HEK293 (cell line): ENCODE measurements at regions of chr1 and their contacts with region 1.

Region 1: DNA sequence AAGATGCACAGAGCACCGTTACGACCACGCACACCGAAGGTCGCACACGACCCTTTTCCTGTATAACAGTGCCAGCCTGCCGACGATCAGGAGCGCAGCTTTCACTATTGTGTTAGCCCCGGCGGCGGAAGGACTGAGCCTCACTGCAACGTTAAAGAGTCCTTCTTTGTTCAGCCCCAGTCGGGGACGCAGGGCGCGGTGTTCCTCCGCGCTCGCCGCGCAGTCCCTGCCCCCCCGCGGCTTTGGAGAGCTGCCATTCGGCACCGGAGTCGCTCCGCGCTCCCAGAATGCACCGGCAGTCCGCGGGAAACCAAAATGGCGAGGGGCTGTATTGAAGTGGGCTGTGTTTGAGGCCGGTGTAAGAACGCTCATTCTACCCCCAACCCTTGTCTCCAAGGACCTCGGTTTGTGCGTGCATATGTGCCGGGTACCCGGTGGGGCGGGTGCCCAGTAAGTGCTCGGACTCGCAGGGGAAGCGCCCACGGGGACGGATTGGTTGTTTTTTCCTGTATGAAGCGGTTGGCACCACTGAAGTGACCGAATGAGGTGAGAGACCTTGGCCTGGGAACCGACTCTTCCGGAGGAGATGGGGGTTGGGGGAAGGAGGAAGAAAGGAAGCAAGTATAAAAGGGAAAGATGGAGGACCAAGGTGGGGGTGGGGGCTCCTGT is at the start of gene MTF2:
- H3K4me3 ChIP-seq: peak within 1 kb of the TSS; percentile 73
- H3K27ac ChIP-seq: peak within 1 kb of the TSS; percentile 88
- H3K4me1 ChIP-seq: peaks cover 6% of the 10 kb centered on the region
- CTCF ChIP-seq: peak; percentile 47; the same call in 1 of the 2 replicates

Region 2: GRCh38 chr1:93093332-93094006 is 14.3 kb after region 1 on chr1:
- CTCF ChIA-PET with region 1: no interaction called
- POLR2A ChIA-PET with region 1: interaction called, 14 read pairs
- H3K4me3 ChIP-seq: no peak overlapping the region
- H3K27ac ChIP-seq: no peak overlapping the region
- H3K4me1 ChIP-seq: no peaks in the 10 kb centered on the region
- CTCF ChIP-seq: no peak

Region 3: DNA sequence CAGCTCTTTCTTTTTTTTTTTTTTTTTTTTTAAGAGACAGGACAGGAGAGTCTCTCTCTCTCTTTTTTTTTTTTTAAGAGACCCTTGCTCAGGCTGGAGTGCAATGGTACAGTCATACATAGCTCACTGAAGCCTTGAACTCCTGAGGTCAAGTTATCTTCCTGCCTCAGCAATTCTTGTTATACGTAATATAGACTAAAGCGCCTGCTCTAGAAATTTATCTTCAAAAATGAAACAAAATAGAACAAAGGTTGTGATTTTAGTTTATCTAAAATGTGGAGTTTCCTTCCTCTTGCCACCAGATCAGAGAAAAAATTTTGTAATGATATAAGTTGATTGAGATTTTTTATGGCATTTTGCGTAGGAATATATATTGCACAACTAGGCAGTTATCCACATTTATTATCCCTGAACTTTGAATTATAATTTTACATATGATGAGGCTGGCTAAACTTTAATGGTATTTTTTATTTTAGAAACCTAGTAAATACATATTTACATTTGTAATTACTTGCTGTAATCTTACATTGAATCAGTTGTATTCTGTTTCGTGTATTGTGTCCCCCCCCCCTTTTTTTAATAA is 44.2 kb after region 1 on chr1:
- CTCF ChIA-PET with region 1: no interaction called
- POLR2A ChIA-PET with region 1: no interaction called
- H3K4me3 ChIP-seq: no peak overlapping the region
- H3K27ac ChIP-seq: no peak overlapping the region
- H3K4me1 ChIP-seq: no peaks in the 10 kb centered on the region
- CTCF ChIP-seq: no peak

Region 4: DNA sequence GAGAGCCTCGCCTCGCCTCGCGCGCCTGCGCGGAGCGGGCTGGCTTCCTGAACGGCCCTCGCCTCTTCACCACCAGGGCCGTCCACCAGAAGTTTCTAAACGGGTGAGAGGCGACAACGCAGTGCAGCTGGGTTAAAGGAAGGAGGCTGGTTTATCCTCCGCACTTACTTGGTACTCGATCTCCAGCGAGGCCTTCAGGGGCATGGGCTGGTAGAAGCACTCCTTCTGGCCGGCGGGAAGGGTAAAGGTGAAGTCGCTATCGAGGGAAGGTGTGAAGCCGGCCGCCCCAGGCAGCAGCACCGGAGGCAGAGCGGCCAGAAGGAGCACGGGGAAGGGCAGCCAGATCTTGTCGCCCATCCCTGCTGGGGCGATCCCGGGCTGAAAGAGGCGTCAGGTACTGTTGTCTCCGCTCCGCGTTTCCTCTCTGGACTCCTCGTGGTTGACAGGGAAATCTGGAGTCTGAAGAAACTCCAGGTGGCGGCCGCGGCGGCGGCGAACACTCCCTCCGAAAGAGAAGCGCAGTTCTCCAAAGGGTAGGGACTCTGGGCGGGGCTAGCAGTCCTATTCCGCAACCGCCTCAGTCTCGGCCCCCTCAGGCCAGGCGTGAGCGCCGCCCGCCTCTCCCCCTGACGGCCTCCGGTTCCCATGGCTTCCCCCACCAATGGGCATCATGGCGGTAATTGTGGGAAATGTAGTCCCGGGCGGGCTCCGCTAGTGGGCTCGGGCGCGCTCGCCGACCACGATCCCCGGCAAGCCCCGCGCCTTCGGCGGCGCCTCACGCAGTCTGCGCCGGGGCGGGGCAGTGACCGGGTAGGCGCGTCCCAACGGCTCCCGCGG is 101.0 kb after region 1 on chr1 and contains the start of gene TMED5:
- CTCF ChIA-PET with region 1: interaction called, 4 read pairs
- POLR2A ChIA-PET with region 1: interaction called, 16 read pairs
- H3K4me3 ChIP-seq: peak within 1 kb of the TSS; percentile 98
- H3K27ac ChIP-seq: peak within 1 kb of the TSS; percentile 94
- H3K4me1 ChIP-seq: no peaks in the 10 kb centered on the region
- CTCF ChIP-seq: peak; percentile 79; the same call in 1 of the 2 replicates

Region 5: DNA sequence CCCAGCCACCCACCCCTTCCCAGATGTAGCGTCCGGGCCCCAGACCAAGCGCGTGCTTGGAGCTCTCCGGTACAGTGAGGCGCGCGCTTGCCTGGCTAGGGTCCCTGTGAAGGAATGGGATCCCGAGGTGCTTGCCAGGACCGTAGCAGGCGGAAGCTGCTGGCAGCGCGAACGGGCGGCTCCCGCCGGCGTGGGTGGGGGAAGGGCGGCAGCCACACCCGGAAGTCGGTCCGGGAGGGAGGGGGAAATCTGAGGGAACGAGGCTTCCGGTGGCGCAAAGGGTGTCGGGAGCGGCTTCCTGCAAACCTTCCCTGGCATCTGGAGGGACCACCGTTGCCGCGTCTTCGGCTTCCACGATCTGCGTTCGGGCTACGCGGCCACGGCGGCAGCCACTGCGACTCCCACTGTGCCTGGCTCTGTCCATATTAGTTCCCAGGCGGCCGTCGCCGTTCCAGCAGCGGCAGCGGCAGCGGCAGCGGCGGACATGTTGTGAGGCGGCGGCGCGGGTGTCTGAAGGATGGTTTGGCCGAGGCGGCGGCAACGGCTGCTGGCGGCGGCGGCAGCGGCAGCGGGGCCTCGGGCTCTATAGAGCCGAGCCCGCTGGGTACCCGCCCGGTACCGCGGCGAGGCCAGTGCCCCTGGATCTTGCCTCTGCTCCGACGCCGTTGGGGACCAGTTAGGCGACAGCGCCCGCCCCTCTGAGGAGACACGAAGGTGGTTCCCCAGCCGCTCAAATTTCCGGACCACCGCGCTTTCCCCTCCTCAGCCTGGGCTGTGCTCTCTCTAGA is 266.7 kb after region 1 on chr1 and contains the start of gene DR1:
- CTCF ChIA-PET with region 1: no interaction called
- POLR2A ChIA-PET with region 1: interaction called, 10 read pairs
- H3K4me3 ChIP-seq: peak within 1 kb of the TSS; percentile 99
- H3K27ac ChIP-seq: peak within 1 kb of the TSS; percentile 98
- H3K4me1 ChIP-seq: peaks cover 3% of the 10 kb centered on the region; the same call in 1 of the 2 replicates
- CTCF ChIP-seq: no peak; the same call in 1 of the 2 replicates